SK-N-SH (cell line): ENCODE measurements at regions of chr12 and their contacts with region 1.

Region 1: GRCh38 chr12:124906606-124907261 is 7.7 kb downstream of the UBC start:
- DNase-seq: peak; percentile 80
- H3K4me3 ChIP-seq: no peak overlapping the region; a peak in 1 of 4 replicates
- H3K27ac ChIP-seq: no peak overlapping the region; a peak in 1 of 4 replicates
- H3K4me1 ChIP-seq: peaks cover 16 to 24% of the 10 kb centered on the region in 2 experiments
- H3K27me3 ChIP-seq: no peaks in the 10 kb centered on the region
- CTCF ChIP-seq: peak; percentile 99
- EP300 ChIP-seq: no peak
- RAD21 ChIP-seq: peak; percentile 96

Region 2: DNA sequence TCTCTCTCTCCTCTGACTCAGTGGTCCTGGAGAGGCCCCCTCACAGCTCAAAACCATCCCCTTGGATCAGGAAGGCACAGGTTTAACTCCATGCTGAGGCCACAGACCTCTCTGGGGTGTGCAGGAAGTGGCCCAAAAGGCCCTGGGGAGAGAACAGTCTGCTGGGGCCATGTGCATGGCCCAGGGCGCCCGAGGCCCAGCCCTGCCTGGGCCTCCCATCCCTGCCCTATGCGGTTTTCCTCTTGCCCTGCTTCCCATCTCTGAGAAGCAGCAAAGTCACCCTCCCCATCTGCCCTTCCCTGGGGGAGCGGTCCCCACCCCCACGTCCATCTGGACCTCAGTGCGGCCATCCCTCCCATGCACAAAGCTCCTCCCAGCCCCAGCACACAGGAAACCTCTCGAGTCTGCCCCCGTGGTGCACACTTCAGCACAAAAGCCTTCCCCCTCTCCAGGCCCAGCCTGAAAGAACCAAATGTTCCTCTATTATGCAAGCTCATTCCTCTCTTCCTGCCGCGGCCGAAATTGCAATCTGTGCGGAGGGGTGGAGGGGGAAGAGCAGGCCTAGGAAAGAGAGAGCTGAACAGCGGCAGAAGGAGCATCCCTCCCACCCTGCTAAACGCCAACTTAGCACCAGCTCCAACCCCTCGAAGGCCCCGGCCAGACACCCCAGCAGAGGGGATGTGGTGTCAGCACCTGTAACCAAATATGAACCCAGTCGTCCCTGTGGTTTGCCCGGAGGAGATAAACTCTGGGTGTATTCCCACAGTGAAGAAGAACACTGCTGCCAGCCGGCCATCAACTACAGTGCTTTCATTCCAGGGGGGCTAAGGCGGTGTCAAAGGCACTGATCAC is 151.6 kb before region 1 on chr12:
- CTCF ChIA-PET with region 1: no interaction called
- POLR2A ChIA-PET with region 1: no interaction called
- DNase-seq: peak; percentile 75
- H3K4me3 ChIP-seq: no peak overlapping the region
- H3K27ac ChIP-seq: peak overlapping the region in 1 of 2 experiments; percentile 69; a peak in 2 of 4 replicates
- H3K4me1 ChIP-seq: peaks cover 0 to 36% of the 10 kb centered on the region in 2 experiments; a peak in 1 of 4 replicates
- H3K27me3 ChIP-seq: no peaks in the 10 kb centered on the region
- CTCF ChIP-seq: no peak
- EP300 ChIP-seq: no peak
- RAD21 ChIP-seq: no peak

Region 3: DNA sequence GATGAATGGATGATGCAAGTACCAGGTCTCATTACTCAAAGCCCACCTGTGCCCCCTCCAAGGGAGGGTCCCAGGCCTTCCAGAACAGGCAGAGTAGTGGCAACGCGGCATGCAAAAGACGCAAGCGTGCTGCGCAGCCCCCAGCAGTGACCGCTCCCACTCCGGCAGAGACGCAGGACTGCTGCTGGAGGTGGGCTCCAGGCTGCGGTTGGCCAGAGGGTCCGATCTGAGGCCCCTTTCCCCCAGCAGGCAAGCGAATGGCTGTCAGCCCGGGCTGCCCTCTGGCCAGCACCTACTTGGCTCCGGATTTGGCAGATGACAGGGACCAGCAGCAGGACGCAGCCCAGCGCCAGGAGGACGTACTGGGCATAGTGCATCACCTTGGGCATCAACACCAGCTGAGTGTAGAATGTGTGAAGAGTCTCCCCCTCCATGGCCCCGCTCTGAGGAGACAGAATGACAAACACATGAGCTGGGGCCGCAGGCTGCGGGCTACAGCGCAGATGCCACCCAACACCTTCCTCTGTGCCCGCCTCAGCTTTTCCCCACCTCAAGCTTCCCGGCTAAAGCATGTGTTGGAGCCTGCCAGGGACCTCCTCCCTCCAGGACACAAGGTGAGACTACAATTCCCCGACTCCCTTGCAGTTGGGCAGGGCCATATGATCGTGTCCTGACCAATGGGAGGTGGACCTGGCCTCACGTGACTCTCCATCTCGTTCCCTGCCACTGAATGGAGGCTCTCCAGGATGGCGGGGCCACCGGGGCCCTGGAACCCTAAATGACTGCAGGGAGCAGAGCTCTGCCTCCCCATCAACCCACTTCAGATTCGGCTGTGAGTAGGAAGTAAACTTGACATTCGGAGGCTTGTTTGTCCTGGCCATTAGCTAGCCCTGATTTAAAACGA is 120.4 kb before region 1 on chr12:
- CTCF ChIA-PET with region 1: interaction called, 14 read pairs
- POLR2A ChIA-PET with region 1: interaction called, 5 read pairs
- DNase-seq: peak; percentile 98
- H3K4me3 ChIP-seq: peak overlapping the region; percentile 53 to 55
- H3K27ac ChIP-seq: peak overlapping the region in 1 of 2 experiments; percentile 51; a peak in 1 of 4 replicates
- H3K4me1 ChIP-seq: peaks cover 0 to 8% of the 10 kb centered on the region in 2 experiments; a peak in 1 of 4 replicates
- H3K27me3 ChIP-seq: no peaks in the 10 kb centered on the region
- CTCF ChIP-seq: no peak
- EP300 ChIP-seq: no peak
- RAD21 ChIP-seq: no peak

Region 4: DNA sequence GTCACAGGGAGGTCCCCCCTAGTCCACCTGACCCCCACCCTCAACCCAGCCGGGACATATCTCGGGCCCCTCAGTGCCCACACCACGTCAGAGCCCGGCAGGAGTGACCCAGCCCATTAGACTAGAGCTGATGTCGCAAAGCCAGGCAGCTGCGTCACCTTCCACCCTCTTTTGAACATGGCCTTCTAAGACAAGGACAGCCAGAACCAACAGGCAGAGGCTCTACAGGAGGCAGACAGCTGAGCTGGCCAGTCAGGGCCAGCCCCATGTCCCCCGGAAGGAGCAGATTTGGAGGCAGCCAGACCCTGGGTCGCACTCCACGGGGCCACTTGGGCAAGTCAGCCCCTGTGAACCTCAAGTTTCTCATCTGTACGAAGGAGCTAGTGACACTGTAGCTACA is 87.2 kb before region 1 on chr12:
- CTCF ChIA-PET with region 1: interaction called, 17 read pairs
- POLR2A ChIA-PET with region 1: no interaction called
- DNase-seq: no peak
- H3K4me3 ChIP-seq: no peak overlapping the region
- H3K27ac ChIP-seq: no peak overlapping the region
- H3K4me1 ChIP-seq: no peaks in the 10 kb centered on the region
- H3K27me3 ChIP-seq: no peaks in the 10 kb centered on the region
- CTCF ChIP-seq: no peak
- EP300 ChIP-seq: no peak
- RAD21 ChIP-seq: no peak

Region 5: DNA sequence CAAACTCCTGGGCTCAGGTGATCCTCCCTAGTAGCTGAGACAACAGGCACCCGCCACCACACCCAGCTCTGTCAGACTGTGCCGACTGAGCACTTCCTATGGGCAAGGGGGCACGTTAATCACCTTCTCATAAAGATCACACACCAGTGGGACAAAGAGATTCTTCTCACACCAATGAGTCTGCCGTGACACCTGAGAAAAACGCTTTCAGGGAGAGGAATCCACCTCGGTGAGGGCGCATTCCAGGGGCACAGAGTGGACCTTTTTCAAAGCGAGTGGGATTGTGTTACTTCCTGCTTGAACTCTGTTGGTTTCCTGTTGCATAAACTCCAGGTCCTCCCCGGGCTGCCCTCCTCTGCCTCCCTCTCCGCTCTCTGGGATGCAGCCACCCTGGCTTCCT is 25.6 kb before region 1 on chr12:
- CTCF ChIA-PET with region 1: interaction called, 19 read pairs
- POLR2A ChIA-PET with region 1: no interaction called
- DNase-seq: no peak
- H3K4me3 ChIP-seq: no peak overlapping the region
- H3K27ac ChIP-seq: no peak overlapping the region
- H3K4me1 ChIP-seq: peaks cover 0 to 2% of the 10 kb centered on the region in 2 experiments; a peak in 1 of 4 replicates
- H3K27me3 ChIP-seq: no peaks in the 10 kb centered on the region
- CTCF ChIP-seq: no peak
- EP300 ChIP-seq: no peak
- RAD21 ChIP-seq: no peak

Region 6: DNA sequence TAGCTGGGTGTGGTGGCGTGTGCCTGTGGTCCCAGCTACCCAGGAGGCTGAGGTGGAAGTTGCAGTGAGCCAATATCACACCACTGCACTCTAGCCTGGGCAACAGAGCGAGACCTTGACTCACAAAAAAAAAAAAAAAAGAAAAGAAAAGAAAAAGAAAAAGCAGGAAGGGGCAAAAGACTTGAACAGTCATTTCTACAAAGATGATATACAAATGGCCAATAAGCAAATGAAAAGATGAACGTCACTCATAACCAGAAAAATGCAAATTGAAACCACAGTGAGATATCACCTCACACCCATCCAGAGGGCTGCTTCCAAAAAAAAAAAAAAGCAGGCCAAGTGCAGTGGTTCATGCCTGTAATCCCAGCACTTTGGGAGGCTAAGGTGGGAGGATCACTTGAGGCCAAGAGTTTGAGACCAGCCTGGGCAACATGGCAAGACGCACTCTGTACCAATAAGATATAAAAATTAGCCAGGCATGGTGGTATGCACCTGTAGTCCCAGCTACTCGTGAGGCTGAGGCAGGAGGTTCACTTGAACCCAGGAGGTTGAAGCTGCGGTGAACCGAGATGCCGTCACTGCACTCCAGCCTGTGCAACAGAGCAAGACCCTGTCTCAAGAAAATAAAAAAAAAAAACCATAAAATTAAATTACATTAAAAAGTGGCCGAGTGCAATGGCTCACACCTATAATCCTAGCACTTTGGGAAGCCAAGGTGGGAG is 12.8 kb before region 1 on chr12:
- CTCF ChIA-PET with region 1: interaction called, 17 read pairs
- POLR2A ChIA-PET with region 1: no interaction called
- DNase-seq: no peak
- H3K4me3 ChIP-seq: no peak overlapping the region
- H3K27ac ChIP-seq: no peak overlapping the region
- H3K4me1 ChIP-seq: peaks cover 0 to 6% of the 10 kb centered on the region in 2 experiments; a peak in 1 of 4 replicates
- H3K27me3 ChIP-seq: no peaks in the 10 kb centered on the region
- CTCF ChIP-seq: no peak
- EP300 ChIP-seq: no peak
- RAD21 ChIP-seq: no peak

Region 7: DNA sequence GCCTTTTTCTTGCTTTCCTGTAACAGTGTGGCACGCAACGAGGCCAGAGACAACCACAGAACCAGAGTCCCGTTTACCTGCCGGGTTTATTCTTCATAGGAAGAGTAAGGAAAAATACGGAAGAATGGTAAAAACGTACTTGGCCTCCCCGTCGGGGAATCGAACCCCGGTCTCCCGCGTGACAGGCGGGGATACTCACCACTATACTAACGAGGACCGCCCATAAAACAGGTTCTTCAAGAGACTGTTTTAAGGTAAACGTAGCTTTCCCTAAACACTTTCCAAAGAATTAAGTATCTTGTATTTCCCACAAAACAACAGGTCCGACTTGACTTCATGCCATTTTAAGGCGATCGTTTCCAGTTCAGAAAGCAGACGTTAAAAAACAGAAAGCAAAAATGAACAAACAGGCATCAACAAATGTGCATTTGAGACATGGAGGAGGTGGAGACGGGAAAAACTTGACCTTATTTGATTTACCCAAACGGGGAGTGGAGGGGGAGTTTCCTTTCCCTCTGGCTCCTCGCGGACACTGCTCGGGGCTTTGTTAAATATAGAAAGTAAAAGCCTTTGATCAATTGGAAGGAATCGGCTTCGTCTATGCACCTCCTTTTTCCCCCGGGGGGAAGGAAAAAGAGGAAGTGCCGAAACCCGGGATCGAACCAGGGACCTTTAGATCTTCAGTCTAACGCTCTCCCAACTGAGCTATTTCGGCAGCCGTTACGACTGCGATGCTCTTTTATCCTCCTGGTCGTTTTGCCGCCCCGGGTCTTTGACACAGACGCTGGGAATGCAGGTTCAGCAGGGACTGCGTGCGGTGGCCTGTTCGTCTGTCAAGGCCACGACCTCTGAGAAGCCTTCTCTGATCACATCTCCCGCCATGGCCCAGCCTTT is 20.7 kb after region 1 on chr12:
- CTCF ChIA-PET with region 1: interaction called, 22 read pairs
- POLR2A ChIA-PET with region 1: no interaction called
- DNase-seq: peak; percentile 89
- H3K4me3 ChIP-seq: peak overlapping the region; percentile 69 to 72
- H3K27ac ChIP-seq: peak overlapping the region; percentile 71 to 91
- H3K4me1 ChIP-seq: peaks cover 0 to 10% of the 10 kb centered on the region in 2 experiments; a peak in 1 of 4 replicates
- H3K27me3 ChIP-seq: no peaks in the 10 kb centered on the region
- CTCF ChIP-seq: no peak
- EP300 ChIP-seq: peak in 1 of 2 experiments; percentile 47; a peak in 1 of 4 replicates
- RAD21 ChIP-seq: no peak